ENCODE measurements at regions of chr1 and their contacts with region 1.

Region 1: GRCh38 chr1:154760469-154760933 is 109.6 kb downstream of the KCNN3 start:
- DNase-seq: peak; percentile 79
- H3K4me3 ChIP-seq: peak overlapping the region; percentile 40
- H3K27ac ChIP-seq: no peak overlapping the region
- H3K4me1 ChIP-seq: no peaks in the 10 kb centered on the region
- H3K27me3 ChIP-seq: peaks cover 20% of the 10 kb centered on the region
- CTCF ChIP-seq: peak; percentile 71

Region 2: DNA sequence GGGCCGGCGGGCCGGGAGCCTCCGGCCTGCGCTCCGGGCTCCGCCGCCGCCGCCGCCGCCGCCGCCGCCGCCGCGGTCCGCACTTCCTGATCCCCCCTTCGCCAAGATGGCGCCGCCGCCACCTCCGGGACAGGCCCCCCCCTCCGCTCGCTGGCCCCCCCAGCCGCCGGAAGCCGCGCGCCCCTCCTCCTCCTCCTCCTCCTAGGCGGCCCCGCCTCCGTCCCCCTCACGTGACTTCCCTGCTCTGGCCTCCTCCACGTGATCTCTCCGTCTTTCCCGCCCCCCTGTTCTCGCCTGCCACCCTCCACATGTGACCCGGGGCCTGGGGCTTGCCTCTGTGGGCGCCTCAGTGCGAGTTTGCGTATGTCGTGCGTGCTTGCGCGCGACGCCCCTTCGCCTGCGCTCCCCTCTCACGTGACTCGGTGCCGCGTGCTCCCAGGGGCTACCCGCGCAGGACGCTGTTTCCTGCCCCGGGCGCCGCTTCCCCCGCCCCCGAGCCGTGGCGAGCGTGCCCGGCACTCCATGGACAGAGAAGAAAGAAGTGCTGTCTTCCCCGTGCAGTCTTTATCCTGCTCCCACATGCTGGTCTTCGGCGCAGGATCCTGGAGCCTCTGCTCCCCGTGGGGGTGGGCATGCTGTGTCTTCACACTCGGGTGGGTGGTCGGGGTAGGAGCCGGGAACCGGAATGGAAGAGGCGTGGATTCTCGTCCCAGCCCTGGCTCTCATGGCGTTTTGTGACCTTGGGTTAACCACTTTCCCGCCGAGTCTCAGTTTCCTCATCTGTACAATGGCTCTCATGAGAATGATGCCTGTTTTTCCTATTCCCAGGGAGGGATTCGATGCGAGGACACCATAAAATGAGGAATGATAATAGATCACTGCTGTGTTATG is 201.7 kb before region 1 on chr1 and contains the start of gene UBE2Q1:
- intact Hi-C with region 1: loop called (anchors 10 kb)
- DNase-seq: peak; percentile 99
- H3K4me3 ChIP-seq: peak within 1 kb of the TSS; percentile 94
- H3K27ac ChIP-seq: peak within 1 kb of the TSS; percentile 88
- H3K4me1 ChIP-seq: peaks cover 7% of the 10 kb centered on the region
- H3K27me3 ChIP-seq: no peaks in the 10 kb centered on the region
- CTCF ChIP-seq: no peak
- total RNA-seq, gene UBE2Q1: 74.1 to 86.1 TPM